Activated CD4-positive, alpha-beta memory T cell treated with anti-CD3 and anti-CD28 coated beads, Interleukin-2, amount 10 ng/mL, durations not matched to agents 7 days and 5 days (primary cell): ENCODE measurements at regions of chr2 and their contacts with region 1.

Region 1: GRCh38 chr2:106098081-106098480 is 96.0 kb downstream of the UXS1 start:
- DNase-seq: no peak
- H3K4me3 Mint-ChIP-seq: no peak overlapping the region
- H3K27ac Mint-ChIP-seq: peak overlapping the region; percentile 44
- H3K4me1 Mint-ChIP-seq: peaks cover 51% of the 10 kb centered on the region
- H3K27me3 Mint-ChIP-seq: no peaks in the 10 kb centered on the region

Region 2: GRCh38 chr2:105576440-105577252 is 521.4 kb before region 1 on chr2:
- CTCF ChIA-PET with region 1: interaction called, 10 read pairs
- POLR2A ChIA-PET with region 1: no interaction called
- DNase-seq: no peak
- H3K4me3 Mint-ChIP-seq: no peak overlapping the region
- H3K27ac Mint-ChIP-seq: peak overlapping the region; percentile 10
- H3K4me1 Mint-ChIP-seq: peaks cover 23% of the 10 kb centered on the region
- H3K27me3 Mint-ChIP-seq: peaks cover 7% of the 10 kb centered on the region

Region 3: GRCh38 chr2:105749583-105750400 is 348.3 kb before region 1 on chr2:
- CTCF ChIA-PET with region 1: interaction called, 7 read pairs
- POLR2A ChIA-PET with region 1: interaction called, 17 read pairs
- DNase-seq: peak; percentile 57
- H3K4me3 Mint-ChIP-seq: peak overlapping the region; percentile 95
- H3K27ac Mint-ChIP-seq: peak overlapping the region; percentile 90
- H3K4me1 Mint-ChIP-seq: peaks cover 82% of the 10 kb centered on the region
- H3K27me3 Mint-ChIP-seq: no peaks in the 10 kb centered on the region

Region 4: DNA sequence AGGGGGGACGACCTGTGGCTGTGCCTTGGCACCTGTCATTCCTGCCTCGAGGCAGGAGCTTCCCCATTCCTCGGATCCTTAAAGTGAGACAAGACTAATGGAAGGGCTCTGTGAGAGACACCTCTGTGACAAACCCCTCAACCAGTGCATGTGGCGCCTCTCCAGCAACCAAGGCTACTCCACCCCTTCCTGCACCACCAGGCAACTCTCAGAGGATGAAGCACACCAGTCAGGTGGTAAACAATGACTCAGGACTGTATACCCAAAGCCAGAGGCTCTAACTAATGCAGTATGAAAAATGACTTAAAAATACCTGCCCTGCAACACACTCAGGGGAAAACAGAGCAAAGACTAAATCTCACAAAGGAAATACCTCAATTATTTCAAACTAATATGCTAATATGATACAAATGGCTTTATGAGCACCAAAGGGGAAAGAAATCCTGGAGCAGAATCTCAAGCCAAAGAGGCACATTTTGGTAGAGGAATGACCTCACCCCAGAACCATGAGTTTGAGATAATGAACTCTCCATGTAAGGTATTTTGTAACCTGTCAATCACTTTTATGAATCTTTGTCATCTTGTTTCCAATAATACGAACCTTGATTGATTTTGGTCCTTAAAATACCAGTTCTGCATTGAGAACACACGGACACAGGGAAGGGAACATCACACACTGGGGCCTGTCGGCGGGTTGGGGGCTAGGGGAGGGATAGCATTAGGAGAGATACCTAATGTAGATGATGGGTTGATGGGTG is 40.7 kb before region 1 on chr2:
- CTCF ChIA-PET with region 1: interaction called, 10 read pairs
- POLR2A ChIA-PET with region 1: interaction called, 6 read pairs
- DNase-seq: peak; percentile 78
- H3K4me3 Mint-ChIP-seq: peak overlapping the region; percentile 33
- H3K27ac Mint-ChIP-seq: peak overlapping the region; percentile 96
- H3K4me1 Mint-ChIP-seq: peaks cover 76% of the 10 kb centered on the region
- H3K27me3 Mint-ChIP-seq: no peaks in the 10 kb centered on the region

Region 5: GRCh38 chr2:106115250-106115649 is 17.2 kb after region 1 on chr2:
- CTCF ChIA-PET with region 1: no interaction called
- POLR2A ChIA-PET with region 1: no interaction called
- DNase-seq: no peak
- H3K4me3 Mint-ChIP-seq: no peak overlapping the region
- H3K27ac Mint-ChIP-seq: no peak overlapping the region
- H3K4me1 Mint-ChIP-seq: peaks cover 16% of the 10 kb centered on the region
- H3K27me3 Mint-ChIP-seq: no peaks in the 10 kb centered on the region

Region 6: DNA sequence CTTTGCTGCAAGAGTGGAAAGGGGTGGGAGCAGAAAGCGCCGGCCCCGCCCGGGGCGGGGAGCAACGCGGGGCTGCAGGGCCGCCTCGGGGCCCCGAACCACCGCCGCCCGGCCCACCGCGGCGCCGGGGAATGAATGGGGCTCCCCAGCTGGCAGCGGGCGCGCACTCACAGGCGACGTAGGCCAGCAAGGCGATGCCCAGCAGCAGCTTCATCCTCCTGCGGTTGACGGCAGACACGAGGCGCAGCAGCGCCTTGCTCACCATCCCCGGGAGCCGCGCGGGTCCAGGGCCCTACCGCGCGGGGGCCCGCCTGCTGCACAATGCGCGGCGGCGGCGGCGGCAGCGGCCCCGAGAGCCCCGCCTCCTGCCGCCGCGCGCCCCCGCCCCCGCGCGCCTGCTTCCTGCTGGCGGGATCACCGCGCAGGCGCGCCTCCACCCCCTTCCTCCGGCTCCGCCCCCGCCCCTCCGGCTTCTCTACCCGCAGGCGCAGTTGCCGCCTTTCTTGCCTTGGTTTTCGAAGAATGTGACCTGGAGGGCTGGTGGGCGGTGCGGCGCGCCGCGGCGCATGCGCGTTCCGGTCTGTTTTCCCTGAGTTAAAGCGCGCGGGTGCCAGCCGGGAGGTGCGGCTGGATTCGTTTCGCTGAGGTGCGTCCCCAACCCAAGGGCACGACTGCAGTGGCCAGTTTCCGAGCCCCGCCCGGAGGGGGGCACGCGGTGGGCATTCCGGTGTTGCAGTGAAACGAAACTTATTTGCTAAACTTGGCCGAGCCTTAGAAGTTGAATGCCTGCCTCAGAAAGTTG is 96.1 kb after region 1 on chr2 and contains the start of gene UXS1:
- CTCF ChIA-PET with region 1: no interaction called
- POLR2A ChIA-PET with region 1: interaction called, 10 read pairs
- DNase-seq: peak; percentile 98
- H3K4me3 Mint-ChIP-seq: peak within 1 kb of the TSS; percentile 91
- H3K27ac Mint-ChIP-seq: peak within 1 kb of the TSS; percentile 81
- H3K4me1 Mint-ChIP-seq: peaks cover 41% of the 10 kb centered on the region
- H3K27me3 Mint-ChIP-seq: no peaks in the 10 kb centered on the region
- total RNA-seq, gene UXS1: 74.4 to 74.6 TPM